Stomach (tissue), 19 donors: ENCODE measurements at regions of chr17 and their contacts with region 1.

Region 1: DNA sequence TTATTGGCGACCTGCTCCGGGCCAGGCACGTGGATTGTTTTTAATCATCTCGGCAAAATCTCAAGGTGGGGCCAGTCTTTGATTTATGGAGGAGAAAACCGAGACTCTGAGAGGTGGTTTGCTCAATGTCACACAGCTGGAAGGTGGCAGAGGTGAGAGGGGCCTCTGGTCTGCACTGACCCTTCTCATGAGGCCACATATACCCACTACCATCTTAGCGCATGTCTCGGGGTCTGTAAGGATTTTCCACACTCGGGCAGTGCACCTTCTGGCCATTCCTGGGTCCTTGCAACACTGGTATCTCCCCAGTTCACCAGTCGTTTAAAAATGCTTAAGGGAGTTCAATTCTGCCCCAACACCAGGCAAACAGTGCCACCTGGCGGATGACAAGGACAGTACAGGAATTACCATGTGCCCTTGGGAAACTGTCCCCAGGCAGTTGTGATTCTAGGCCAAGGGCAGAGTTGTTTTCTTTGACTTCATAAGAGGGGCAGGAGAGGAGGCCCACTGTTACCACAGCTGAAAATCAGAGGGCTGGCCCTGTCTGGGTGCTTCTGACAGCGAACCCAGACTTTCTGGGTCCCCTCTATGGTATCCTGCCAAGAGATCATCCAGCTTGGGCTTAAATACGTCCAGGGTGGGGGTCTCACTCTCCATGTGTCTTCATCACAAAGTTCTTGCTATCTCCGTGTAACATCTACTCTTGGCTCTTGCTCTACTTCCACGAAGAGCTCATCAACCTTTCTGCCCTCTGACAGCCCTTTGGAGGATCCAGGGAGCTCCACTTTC is 39.4 kb upstream of the RAI1 start:
- DNase-seq: peak; percentile 83 to 93
- H3K4me3 ChIP-seq: no peak overlapping the region
- H3K27ac ChIP-seq: no peak overlapping the region
- H3K4me1 ChIP-seq: no peaks in the 10 kb centered on the region
- H3K27me3 ChIP-seq: peaks cover 0 to 4% (median 0%) of the 10 kb centered on the region in 3 donors
- CTCF ChIP-seq: peak in 6 of 7 experiments; percentile 10 to 95 (median 90)
- EP300 ChIP-seq: no peak
- POLR2A ChIP-seq: no peak

Region 2: DNA sequence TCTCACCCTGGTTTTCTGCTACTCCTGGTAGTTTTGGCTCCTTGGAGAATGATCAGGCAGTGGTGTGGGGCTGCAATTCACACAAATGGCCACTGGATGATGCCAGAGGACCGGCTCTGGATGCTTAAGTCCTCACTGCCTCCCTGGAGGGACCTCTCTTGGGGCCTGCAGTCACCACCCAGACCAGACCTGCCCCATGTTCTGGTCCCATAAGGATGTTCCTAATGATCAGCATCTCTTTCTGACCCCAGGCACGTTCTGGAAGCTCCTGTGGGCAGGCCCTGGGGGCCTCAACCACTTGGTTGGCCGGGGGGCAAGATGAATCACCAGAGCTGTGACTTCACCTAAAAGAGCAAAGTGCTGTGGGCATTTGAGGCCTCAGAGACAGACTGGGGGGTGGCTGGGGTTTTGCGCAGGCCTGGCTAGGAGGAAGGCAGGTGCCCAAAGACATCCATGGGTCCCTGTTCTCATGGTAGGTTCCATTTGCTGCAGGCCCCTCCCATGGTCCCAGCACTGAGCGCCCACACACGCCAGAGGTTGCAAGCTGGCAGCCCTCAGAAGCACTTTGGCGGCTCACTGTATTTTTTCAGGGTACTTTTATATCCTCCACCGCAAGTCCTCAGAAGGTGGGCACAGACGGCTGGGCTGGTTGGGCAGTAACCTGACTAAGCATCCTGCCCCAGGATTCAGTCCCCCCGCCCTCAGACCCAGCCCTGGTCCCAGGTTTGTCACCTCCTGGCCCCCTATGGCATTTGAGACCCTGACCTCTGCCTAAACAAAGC is 285.5 kb before region 1 on chr17:
- intact Hi-C with region 1: loop called (anchors 5 kb)
- DNase-seq: peak; percentile 83 to 94
- H3K4me3 ChIP-seq: no peak overlapping the region
- H3K27ac ChIP-seq: no peak overlapping the region
- H3K4me1 ChIP-seq: peaks cover 0 to 13% (median 6%) of the 10 kb centered on the region in 4 donors
- H3K27me3 ChIP-seq: peaks cover 0 to 21% (median 0%) of the 10 kb centered on the region in 3 donors
- CTCF ChIP-seq: peak in 6 of 7 experiments; percentile 90 to 100 (median 100)
- EP300 ChIP-seq: no peak
- POLR2A ChIP-seq: no peak

Region 3: GRCh38 chr17:17972126-17972951 is 330.5 kb after region 1 on chr17 and contains the starts of genes DRC3 and TOM1L2:
- intact Hi-C with region 1: no loop called
- DNase-seq: peak; percentile 100
- H3K4me3 ChIP-seq: peak within 1 kb of the TSS; percentile 74 to 95 (median 89)
- H3K27ac ChIP-seq: peak within 1 kb of the TSS; percentile 92 to 99 (median 95)
- H3K4me1 ChIP-seq: peaks cover 23 to 55% (median 36%) of the 10 kb centered on the region in 4 donors
- H3K27me3 ChIP-seq: no peaks in the 10 kb centered on the region
- CTCF ChIP-seq: peak in 2 of 7 experiments; percentile 26 to 30
- EP300 ChIP-seq: no peak
- POLR2A ChIP-seq: peak in 2 of 4 donors; percentile 72 to 88
- total RNA-seq, gene DRC3: 1.1 to 16.5 (median 2.2) TPM in 4 of 5 donors, not detected in the other
- total RNA-seq, gene TOM1L2: 33.8 to 154 (median 51.3) TPM